ENCODE measurements at regions of chr5 and their contacts with region 1.

Region 1: DNA sequence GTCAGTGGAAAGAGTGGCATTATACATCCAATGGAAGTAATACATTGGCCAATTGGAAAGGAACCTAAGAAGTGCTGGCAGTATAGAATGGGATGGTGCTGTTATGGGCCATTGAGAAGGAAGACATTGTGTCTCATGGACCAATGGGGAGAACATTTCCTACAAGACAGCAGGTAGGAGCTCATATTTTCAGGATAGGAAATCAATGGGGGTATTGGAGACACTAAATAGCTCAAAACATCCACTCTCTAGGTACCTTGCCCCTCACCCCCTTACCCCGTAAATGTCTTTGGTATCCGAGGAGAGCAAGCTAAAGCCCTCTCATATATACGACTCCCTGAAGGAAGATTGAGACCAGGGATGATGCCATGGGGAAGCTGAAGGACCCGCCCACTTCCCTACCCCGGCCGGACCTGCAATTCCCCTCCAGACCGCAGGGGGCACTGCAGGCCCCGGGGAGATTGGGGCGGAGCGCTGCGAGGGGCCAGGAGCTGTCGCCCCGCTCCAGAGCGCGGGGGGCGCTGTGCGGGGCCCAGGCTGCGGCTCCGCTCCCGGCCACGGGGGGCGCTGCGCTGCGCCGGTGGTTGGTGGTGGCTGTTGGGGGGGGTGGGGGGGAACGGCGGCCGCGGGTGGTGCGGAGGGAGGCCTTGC is at the start of gene KDM3B:
- DNase-seq: peak; percentile 94
- H3K4me3 Mint-ChIP-seq: peak within 1 kb of the TSS; percentile 94
- H3K27ac Mint-ChIP-seq: peak within 1 kb of the TSS; percentile 91
- H3K4me1 Mint-ChIP-seq: peaks cover 42% of the 10 kb centered on the region
- H3K27me3 Mint-ChIP-seq: no peaks in the 10 kb centered on the region
- total RNA-seq, gene KDM3B: 51.9 to 57.9 TPM

Region 2: DNA sequence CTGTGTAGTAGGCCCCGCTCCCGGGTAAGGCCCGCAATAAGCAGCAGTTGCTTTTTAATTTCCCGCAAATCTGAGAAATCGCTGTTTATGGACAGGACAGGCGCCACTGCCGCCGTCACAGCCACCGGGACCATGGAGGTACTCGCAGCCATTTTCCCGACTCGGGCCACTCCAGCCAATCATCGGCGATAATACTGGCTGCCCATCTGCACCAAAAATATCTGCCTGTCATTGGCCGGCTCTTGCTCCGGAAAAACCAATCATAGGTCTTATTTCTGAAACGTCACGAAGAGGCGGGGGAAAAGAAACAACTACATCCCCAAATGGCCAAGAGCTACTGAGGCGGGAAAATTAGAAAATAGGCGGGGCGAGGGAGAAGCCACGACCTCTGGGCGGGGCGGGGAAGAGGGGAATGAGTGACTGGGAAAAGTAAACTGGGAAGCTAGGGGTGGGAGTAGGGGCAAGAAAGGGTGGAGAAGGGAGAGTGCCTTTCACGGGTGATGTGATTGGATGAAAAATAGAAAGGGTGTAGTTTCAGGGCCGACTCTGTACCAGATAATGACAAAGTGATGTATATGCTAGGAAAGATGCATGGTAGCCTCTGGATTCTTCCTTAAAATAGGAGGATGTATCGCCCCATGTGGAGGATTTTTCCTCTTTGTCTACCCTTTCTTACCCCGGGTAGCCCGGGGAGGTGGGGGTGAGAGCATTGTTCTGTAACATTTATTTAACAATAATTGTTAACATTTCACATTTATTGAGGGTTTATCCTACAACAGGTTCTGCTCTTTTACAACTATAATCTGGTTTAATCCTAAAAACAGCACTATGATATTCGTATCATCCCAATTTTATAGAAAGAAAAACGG is 138.8 kb before region 1 on chr5 and contains the start of gene CDC23:
- CTCF ChIA-PET with region 1: interaction called, 41 read pairs
- POLR2A ChIA-PET with region 1: interaction called, 28 read pairs
- DNase-seq: peak; percentile 94
- H3K4me3 Mint-ChIP-seq: peak within 1 kb of the TSS; percentile 99
- H3K27ac Mint-ChIP-seq: peak within 1 kb of the TSS; percentile 92
- H3K4me1 Mint-ChIP-seq: peaks cover 24% of the 10 kb centered on the region
- H3K27me3 Mint-ChIP-seq: no peaks in the 10 kb centered on the region
- total RNA-seq, gene CDC23: 32.3 to 33.3 TPM

Region 3: DNA sequence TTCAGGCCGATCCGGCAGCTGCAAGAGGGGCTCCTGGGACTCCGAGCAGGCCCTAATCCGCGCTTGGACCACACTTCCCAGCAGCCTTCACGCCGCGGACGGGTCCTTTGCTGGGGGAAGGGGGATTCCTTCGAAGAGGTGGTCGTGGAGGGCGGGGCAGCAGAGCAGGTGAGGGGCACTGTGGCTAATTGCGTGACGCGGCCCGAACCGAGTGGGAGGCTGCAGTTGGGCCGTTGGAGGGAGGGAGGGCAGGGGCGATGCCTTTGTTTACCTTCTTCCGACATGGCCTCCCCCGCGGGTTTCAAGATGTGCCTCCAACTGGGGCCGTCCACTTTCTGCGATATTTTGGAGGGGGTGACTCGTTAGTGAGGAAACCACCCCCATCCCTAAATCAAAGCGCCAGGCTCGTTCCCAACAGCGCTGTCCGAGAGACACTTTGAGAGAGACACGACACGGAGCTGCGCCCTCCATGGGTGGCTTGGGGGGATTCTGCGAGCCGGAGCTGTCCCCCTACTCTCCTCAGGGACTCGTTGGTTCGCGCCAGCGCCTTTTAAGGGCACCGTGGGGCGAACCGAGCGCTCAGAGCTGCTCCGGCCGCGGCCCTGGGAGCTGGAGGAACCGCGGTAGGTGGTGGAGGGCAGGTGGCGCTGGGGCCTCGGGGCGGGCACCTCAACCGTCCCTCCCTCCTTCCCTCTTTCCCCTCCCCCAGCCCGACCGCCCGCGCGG is 14.3 kb before region 1 on chr5 and contains the start of gene FAM53C:
- CTCF ChIA-PET with region 1: interaction called, 387 read pairs
- POLR2A ChIA-PET with region 1: interaction called, 182 read pairs
- DNase-seq: peak; percentile 93
- H3K4me3 Mint-ChIP-seq: peak within 1 kb of the TSS; percentile 82
- H3K27ac Mint-ChIP-seq: peak within 1 kb of the TSS; percentile 89
- H3K4me1 Mint-ChIP-seq: peaks cover 42% of the 10 kb centered on the region
- H3K27me3 Mint-ChIP-seq: no peaks in the 10 kb centered on the region
- total RNA-seq, gene FAM53C: 21.7 to 27.1 TPM

Region 4: DNA sequence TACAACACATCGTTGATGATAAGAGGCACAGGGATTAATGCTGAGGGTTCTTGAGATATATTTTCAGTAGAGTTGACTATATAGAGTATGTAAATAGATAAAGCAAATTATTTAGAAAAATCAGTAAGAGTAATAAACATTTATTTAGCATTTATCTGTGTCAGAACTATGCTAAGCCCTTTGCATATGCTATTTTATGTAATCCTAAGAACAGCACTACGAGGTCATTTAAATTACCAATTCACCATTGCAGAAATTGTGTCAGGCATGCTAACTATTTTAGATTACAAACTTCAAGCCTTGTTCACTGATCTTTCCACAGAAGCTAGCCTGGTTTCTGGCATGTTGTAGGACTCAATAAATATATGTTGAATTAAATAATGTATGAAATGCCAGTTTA is 66.2 kb after region 1 on chr5:
- CTCF ChIA-PET with region 1: interaction called, 13 read pairs
- POLR2A ChIA-PET with region 1: no interaction called
- DNase-seq: no peak
- H3K4me3 Mint-ChIP-seq: no peak overlapping the region
- H3K27ac Mint-ChIP-seq: no peak overlapping the region
- H3K4me1 Mint-ChIP-seq: peaks cover 5% of the 10 kb centered on the region
- H3K27me3 Mint-ChIP-seq: no peaks in the 10 kb centered on the region

Region 5: DNA sequence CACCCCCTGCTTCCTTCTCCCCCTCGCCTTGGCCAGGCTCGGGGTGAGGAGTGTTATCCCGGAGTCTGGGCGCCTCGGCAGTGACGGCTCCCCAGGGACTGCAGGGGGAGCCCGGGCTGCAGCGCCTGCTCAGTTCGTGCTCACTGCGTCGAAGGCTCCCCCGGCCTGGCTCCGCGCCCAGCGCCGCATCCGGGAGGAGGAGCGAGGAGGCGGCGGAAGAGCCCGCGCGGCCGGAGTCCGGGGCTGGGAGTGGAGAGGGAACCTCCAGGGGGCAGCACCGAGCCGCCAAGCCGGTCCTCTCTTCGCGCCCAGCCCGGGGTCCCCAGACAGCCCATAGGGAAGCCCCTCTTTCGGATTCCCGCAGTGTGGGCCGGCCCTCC is 111.8 kb after region 1 on chr5:
- CTCF ChIA-PET with region 1: interaction called, 15 read pairs
- POLR2A ChIA-PET with region 1: interaction called, 20 read pairs
- DNase-seq: peak; percentile 93
- H3K4me3 Mint-ChIP-seq: peak overlapping the region; percentile 83
- H3K27ac Mint-ChIP-seq: peak overlapping the region; percentile 91
- H3K4me1 Mint-ChIP-seq: peaks cover 39% of the 10 kb centered on the region
- H3K27me3 Mint-ChIP-seq: peaks cover 21% of the 10 kb centered on the region

Region 6: DNA sequence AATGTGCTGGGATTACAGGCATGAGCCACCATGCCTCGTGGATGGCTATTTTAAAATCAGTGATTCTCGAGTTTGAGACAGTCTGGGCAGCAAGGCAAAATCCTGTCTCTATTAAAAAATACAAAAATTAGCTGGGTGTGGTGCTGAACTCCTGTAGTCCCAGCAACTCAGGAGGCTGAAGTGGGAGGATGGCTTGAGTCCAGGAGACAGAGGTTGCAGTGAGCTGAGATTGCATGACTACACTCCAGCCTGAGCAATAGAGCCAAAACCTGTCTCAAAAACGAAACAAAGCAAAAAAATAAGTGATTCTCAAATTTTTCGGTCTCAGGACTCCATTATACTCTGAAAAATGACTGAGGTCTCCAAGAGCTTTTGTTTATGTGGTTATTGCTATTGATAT is 270.9 kb after region 1 on chr5:
- CTCF ChIA-PET with region 1: no interaction called
- POLR2A ChIA-PET with region 1: no interaction called
- DNase-seq: no peak
- H3K4me3 Mint-ChIP-seq: no peak overlapping the region
- H3K27ac Mint-ChIP-seq: no peak overlapping the region
- H3K4me1 Mint-ChIP-seq: no peaks in the 10 kb centered on the region
- H3K27me3 Mint-ChIP-seq: peaks cover 30% of the 10 kb centered on the region